Calu3 (cell line): ENCODE measurements at regions of chr11 and their contacts with region 1.

Region 1: GRCh38 chr11:1230451-1231395 is 7.9 kb downstream of the MUC5B start:
- DNase-seq: no peak
- H3K4me3 Mint-ChIP-seq: no peak overlapping the region
- H3K27ac Mint-ChIP-seq: no peak overlapping the region
- H3K4me1 Mint-ChIP-seq: no peaks in the 10 kb centered on the region
- H3K27me3 Mint-ChIP-seq: no peaks in the 10 kb centered on the region
- CTCF ChIP-seq: no peak

Region 2: DNA sequence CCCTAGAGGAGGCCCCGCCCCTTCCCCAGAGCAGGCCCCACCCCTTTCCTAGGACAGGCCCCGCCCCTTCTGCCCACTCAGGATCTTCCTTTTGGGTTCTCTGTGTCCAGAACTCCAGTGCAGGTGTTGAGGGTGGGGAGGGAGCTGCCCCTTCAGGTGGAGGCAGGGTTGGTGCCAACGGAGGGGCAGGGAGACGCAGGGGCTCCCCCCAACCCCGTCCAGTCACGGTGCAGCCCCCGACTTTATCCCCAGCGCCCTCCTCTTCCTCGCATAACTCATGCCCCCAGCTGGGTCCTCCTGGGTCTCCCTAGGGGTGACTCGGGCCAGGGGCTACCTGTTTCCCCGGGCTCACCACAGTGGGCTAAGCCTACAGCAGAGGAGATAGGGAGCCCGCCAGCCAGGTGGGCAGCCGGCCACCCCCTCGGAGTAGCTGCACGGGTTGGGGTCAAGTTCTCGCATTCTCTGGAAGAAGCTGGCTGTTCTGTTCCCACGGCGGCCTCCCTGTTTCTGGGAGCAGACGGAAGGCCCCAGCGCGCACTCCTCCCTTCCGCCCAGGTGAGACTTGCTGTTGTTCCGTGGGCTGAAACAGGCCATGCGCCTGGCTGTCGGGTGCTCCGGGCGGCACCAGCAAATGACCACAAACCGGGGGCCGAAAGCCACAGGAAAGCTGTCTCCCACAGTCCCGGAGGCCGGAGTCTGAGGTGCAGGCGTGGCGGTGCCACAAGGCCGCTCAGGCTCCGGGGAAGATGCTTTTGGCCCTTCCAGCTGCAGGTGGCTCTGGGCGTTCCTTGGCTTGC is 117.1 kb before region 1 on chr11:
- CTCF ChIA-PET with region 1: no interaction called
- intact Hi-C with region 1: loop called (anchors 1 kb)
- DNase-seq: no peak
- H3K4me3 Mint-ChIP-seq: no peak overlapping the region
- H3K27ac Mint-ChIP-seq: no peak overlapping the region
- H3K4me1 Mint-ChIP-seq: peaks cover 10% of the 10 kb centered on the region
- H3K27me3 Mint-ChIP-seq: peaks cover 3% of the 10 kb centered on the region
- CTCF ChIP-seq: no peak

Region 3: DNA sequence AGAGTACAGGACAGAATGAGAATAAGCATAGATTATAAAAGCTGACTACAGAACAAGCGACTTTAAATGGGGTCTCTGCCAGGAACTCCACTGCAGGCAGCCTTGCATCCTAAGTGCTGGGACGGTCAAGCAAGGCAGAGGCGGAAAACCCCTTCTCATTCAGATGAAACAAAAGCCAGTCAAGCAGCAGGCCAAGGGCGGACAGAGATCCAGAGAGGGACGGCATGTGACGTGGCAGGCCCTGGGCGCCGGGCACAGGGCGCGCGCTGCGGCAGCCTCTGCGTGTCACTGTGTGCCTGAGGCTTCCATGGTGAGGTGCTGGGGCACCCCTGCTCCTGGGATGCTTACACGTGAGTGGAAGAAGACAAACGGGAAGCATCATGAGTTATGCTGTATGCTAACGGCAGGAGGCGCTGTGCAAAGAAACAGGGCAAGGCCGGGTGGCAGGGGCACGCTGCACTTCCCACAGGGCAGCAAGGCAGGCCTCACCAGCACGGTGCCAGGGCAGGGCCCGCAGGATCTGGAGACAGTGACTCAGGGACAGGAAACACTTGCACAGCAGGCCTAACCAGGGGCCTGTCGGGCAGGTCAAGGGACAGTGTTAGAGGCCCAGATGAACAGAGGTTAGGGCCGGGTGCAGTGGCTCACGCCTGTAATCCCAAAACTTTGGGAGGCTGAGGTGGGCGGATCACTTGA is 72.6 kb after region 1 on chr11:
- CTCF ChIA-PET with region 1: interaction called, 11 read pairs
- intact Hi-C with region 1: no loop called
- DNase-seq: peak; percentile 82
- H3K4me3 Mint-ChIP-seq: peak overlapping the region; percentile 56
- H3K27ac Mint-ChIP-seq: peak overlapping the region; percentile 72
- H3K4me1 Mint-ChIP-seq: peaks cover 40% of the 10 kb centered on the region
- H3K27me3 Mint-ChIP-seq: no peaks in the 10 kb centered on the region
- CTCF ChIP-seq: peak; percentile 80